Caki2 (cell line): ENCODE measurements at regions of chr19 and their contacts with region 1.

Region 1: DNA sequence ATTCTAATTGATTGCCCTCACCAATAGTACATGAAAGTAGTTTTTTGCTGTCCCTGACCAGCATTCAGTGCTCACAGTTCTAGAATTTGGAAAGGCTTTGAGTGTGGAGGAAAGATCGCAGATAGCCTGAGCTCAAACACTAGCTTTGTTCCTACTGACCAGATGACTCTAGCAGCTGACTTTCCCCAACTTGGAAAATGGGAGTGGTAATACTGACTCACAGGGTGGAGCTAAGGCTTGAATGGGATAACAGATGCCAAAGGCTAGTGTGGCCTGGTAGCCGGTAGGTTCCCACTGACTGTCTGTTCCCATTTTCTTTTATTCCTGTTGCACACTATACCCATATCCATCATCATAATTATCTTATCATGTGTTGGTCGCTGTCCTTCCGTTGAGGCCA is 3.7 kb downstream of the ZSCAN22 start:
- DNase-seq: peak; percentile 48

Region 2: GRCh38 chr19:58084596-58085347 is 245.7 kb before region 1 on chr19:
- in situ Hi-C with region 1: no loop called
- DNase-seq: no peak

Region 3: GRCh38 chr19:58228585-58229254 is 101.7 kb before region 1 on chr19 and contains the start of gene ZNF544:
- in situ Hi-C with region 1: loop called (anchors 10 kb)
- DNase-seq: peak; percentile 86
- total RNA-seq, gene ZNF544: 61.6 and 105 TPM in 2 replicates

Region 4: GRCh38 chr19:58278157-58279041 is 52.1 kb before region 1 on chr19 and contains the start of gene ZNF8:
- in situ Hi-C with region 1: no loop called
- DNase-seq: peak; percentile 99
- total RNA-seq, gene ZNF8: 3.0 and 4.9 TPM in 2 replicates

Region 5: GRCh38 chr19:58429745-58430144 is 99.3 kb after region 1 on chr19:
- in situ Hi-C with region 1: no loop called
- DNase-seq: no peak